ENCODE measurements at regions of chr3 and their contacts with region 1.

Region 1: DNA sequence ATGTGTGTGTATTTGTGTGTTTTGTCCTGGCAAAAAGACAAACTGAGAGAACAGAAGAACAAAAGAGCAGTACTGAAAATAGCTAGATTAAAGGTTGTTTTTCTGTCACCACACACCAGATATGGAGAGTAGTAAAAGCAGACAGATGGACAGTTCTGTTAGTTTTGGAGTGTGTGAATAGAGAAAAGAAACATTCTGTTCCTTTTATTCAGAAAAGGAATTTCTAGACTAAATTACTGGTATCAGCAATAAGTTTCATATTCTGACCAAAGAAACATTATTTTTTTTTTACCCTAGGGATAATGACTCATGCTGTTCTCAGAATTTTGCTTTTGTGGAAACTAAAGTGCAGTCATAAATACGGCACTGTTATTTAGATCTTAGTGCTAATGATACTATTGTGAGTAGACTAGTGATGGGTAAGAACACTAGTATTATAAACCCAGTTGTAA is 32.9 kb downstream of the PIK3CA start:
- DNase-seq: no peak
- ATAC-seq: peak; percentile 78
- H3K4me3 Mint-ChIP-seq: no peak overlapping the region
- H3K27ac Mint-ChIP-seq: peak overlapping the region; percentile 60
- H3K4me1 Mint-ChIP-seq: peaks cover 43% of the 10 kb centered on the region
- H3K27me3 Mint-ChIP-seq: no peaks in the 10 kb centered on the region

Region 2: GRCh38 chr3:179158336-179159039 is 22.6 kb before region 1 on chr3:
- CTCF ChIA-PET with region 1: interaction called, 3 read pairs
- POLR2A ChIA-PET with region 1: no interaction called
- intact Hi-C with region 1: loop called in 1 of 2 experiments (anchors 2 kb)
- DNase-seq: no peak
- ATAC-seq: peak; percentile 61
- H3K4me3 Mint-ChIP-seq: no peak overlapping the region
- H3K27ac Mint-ChIP-seq: no peak overlapping the region
- H3K4me1 Mint-ChIP-seq: peaks cover 55% of the 10 kb centered on the region
- H3K27me3 Mint-ChIP-seq: no peaks in the 10 kb centered on the region

Region 3: GRCh38 chr3:179196098-179196497 is 15.1 kb after region 1 on chr3:
- CTCF ChIA-PET with region 1: interaction called, 3 read pairs
- POLR2A ChIA-PET with region 1: interaction called, 3 read pairs
- intact Hi-C with region 1: loop called in 1 of 2 experiments (anchors 1 kb)
- DNase-seq: peak; percentile 8
- ATAC-seq: peak; percentile 78
- H3K4me3 Mint-ChIP-seq: no peak overlapping the region
- H3K27ac Mint-ChIP-seq: no peak overlapping the region
- H3K4me1 Mint-ChIP-seq: peaks cover 57% of the 10 kb centered on the region
- H3K27me3 Mint-ChIP-seq: no peaks in the 10 kb centered on the region

Measured in activated CD4-positive, alpha-beta T cell treated with anti-CD3 and anti-CD28 coated beads for 36 hours (primary cell).